ENCODE measurements at regions of chr14 and their contacts with region 1.

Region 1: GRCh38 chr14:35201066-35201465 is 78.7 kb downstream of the PRORP start:
- DNase-seq: no peak
- H3K4me3 ChIP-seq: no peak overlapping the region
- H3K27ac ChIP-seq: no peak overlapping the region
- H3K4me1 ChIP-seq: no peaks in the 10 kb centered on the region
- H3K27me3 ChIP-seq: no peaks in the 10 kb centered on the region
- CTCF ChIP-seq: no peak

Region 2: DNA sequence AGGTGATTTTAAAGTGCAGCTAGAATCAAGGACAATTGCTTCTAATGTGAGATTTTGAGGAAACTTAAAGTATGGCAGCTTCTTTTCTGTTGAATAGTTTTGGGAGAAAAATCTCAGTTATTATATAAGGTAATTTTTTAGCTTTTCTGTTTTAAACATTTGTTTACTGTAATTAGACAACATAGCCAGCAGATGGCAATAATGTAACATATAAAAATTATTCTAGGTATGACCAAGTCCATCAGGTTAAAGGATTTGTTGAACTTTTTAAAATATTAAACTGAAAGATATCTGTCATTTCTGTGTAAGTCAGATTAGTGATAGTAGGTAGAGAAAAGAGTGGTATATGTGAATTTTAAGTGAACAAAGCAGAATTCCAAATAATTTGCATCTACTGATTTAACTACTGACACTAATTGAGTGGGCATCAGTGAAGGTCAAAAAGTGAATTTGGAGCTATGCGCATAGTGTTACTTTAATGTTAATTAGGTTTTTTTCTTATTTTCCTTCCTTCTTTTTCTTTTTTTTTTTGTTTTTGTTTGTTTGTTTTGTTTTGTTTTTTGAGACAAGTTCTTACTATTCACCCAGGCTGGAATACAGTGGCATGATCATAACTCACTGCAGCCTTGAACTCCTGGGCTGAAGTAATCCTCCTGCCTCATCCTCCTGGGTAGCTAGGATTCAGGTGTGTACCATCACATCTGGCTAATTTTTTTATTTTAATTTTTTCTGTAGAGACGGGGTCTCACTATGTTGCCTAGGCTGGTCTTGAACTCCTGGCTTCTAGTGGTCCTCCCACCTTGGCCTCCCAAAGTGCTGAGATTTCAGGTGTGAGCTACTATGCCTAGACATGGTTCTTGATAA is 60.1 kb before region 1 on chr14:
- intact Hi-C with region 1: loop called (anchors 10 kb)
- DNase-seq: no peak
- H3K4me3 ChIP-seq: no peak overlapping the region
- H3K27ac ChIP-seq: no peak overlapping the region
- H3K4me1 ChIP-seq: no peaks in the 10 kb centered on the region
- H3K27me3 ChIP-seq: no peaks in the 10 kb centered on the region
- CTCF ChIP-seq: peak; percentile 43 to 65

Measured in tibial artery (tissue), 4 donors.